ENCODE measurements at regions of chr17 and their contacts with region 1.

Region 1: GRCh38 chr17:36148559-36149295 is 27.7 kb downstream of the TBC1D3B start:
- DNase-seq: peak; percentile 45
- H3K4me3 ChIP-seq: no peak overlapping the region
- H3K27ac ChIP-seq: no peak overlapping the region
- H3K27me3 ChIP-seq: peaks cover 8% of the 10 kb centered on the region
- CTCF ChIP-seq: peak; percentile 100

Region 2: DNA sequence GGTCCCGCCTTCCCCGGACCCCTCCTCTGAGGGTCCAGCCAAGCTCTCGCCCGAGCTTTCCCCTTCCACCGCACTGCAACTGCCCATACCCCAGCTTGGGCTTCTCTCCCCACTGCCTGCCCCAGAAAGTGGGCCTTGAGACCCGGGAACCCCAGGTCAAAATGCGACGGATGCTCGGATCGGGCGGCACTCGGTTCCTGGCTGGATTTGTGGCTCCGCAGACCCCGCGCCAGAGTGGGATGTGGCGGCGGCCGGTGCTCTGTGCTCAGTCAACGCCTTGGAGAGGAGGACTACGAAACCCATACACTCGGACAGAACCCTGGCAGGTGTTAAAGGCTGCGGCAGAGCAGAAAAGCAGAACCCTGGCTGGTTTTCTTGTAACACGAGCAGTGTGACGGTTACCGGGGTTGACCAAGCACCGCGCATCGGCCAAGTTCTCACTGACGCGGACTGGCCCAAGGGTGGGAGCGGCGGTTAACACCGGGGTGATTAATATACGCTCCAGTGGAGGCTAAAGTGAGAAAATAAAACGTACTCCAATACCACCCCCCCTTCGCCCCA is 699.3 kb before region 1 on chr17:
- CTCF ChIA-PET with region 1: no interaction called
- POLR2A ChIA-PET with region 1: no interaction called
- DNase-seq: no peak
- H3K4me3 ChIP-seq: peak overlapping the region; percentile 12
- H3K27ac ChIP-seq: no peak overlapping the region
- H3K27me3 ChIP-seq: peaks cover 18% of the 10 kb centered on the region
- CTCF ChIP-seq: no peak

Region 3: DNA sequence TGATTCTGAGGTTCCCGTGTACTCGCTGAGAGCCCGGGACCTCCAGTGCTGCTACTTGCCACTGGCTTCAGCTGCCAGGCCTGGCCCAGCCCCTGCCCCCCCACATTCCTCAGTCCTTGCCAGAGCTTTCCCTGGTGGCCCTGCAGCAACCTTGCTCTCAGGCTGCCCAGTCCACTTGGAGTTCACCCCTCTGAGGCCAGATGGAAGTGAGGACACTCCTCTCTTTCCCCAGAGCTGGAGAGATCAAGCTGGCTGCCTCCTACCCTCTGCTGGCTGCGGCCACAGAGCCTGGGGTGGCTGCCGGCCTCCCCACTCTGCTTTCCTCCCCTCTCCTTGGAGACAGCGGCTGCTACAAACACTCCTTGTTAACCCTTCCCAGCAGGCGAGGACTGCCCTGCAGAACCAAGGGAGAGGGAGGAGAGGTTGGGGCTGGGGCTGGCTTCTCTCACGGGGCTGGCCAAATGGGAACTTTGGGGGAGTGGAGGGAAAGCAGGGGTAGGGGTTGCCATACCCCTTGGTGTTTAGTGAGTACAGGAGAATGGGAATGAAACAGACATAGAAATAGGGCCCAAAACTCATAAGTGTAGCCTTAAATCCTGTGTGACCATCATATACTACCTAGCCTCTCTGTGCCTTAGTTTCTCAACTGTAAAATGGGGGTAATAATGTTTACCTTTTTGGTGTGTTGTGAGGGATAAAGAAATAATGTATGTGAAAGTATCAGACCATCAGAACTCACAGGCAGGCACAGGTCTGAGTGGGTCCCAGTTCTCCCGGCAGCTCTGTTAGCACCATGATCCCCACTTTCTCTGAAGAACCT is 395.6 kb before region 1 on chr17 and contains the start of gene GAS2L2:
- CTCF ChIA-PET with region 1: no interaction called
- POLR2A ChIA-PET with region 1: no interaction called
- DNase-seq: no peak
- H3K4me3 ChIP-seq: no peak within 1 kb of the TSS
- H3K27ac ChIP-seq: no peak within 1 kb of the TSS
- H3K27me3 ChIP-seq: peaks cover 40% of the 10 kb centered on the region
- CTCF ChIP-seq: no peak
- polyA plus RNA-seq, gene GAS2L2: not detected in 2 replicates

Region 4: GRCh38 chr17:35969558-35970380 is 179.0 kb before region 1 on chr17:
- CTCF ChIA-PET with region 1: interaction called, 111 read pairs
- POLR2A ChIA-PET with region 1: no interaction called
- DNase-seq: peak; percentile 58
- H3K4me3 ChIP-seq: no peak overlapping the region
- H3K27ac ChIP-seq: no peak overlapping the region
- H3K27me3 ChIP-seq: no peaks in the 10 kb centered on the region
- CTCF ChIP-seq: peak; percentile 80

Region 5: DNA sequence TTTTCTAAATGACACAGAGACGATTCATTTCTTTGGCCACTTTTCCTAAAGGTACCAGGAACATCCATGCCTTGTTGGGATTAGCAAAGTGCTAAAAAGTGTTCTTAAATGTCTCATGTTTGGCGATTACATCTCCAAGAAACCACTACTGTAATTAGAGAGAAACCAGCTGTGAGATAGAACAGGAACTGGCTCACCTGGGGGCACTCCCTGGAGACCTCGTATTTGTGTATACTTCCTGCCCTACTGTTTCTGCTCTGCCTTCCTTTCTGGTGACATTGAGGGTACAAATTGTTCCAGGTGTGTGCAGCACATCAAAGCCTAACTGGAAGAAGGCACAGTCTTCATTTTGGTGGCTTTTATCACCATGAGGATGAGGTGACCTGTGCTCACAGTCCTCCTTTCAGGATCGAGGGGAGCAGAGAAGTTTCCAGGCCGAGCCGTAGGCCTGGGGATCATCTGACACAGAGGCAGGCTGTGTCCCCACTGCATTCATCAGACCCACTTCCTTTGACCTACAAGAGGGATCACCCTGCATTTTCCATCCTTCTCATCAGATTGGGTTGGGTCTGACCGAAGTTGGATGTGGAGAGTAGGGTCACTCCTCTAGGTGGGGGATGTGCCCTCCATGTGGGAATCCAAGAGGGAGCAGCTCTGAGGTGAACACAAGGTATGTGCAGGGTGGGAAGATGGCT is 21.4 kb before region 1 on chr17:
- CTCF ChIA-PET with region 1: interaction called, 36 read pairs
- POLR2A ChIA-PET with region 1: no interaction called
- DNase-seq: no peak
- H3K4me3 ChIP-seq: no peak overlapping the region
- H3K27ac ChIP-seq: no peak overlapping the region
- H3K27me3 ChIP-seq: peaks cover 3% of the 10 kb centered on the region
- CTCF ChIP-seq: no peak

Region 6: GRCh38 chr17:36183001-36183971 is 34.6 kb after region 1 on chr17:
- CTCF ChIA-PET with region 1: interaction called, 38 read pairs
- POLR2A ChIA-PET with region 1: no interaction called
- DNase-seq: peak; percentile 59
- H3K4me3 ChIP-seq: peak overlapping the region; percentile 73
- H3K27ac ChIP-seq: peak overlapping the region; percentile 47
- H3K27me3 ChIP-seq: peaks cover 23% of the 10 kb centered on the region
- CTCF ChIP-seq: no peak

Region 7: DNA sequence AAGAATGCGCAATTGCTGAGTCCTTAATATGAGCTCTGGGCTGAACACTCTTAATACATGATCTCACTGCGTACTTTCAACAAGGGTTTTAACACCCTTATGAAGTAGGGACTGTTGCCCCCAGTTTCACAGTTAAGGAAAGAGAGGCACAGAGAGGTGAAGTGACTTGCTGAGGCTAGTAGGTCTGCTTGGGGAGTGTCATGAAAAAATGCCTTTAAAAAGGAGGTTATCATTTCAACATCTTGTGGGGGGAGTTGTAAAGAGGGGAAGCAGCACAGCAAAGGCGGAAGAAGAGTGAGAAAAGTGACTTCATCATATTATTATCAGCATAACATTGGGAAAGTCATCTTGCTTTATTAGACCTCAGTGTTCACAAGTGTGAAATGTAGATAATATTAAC is 64.2 kb after region 1 on chr17:
- CTCF ChIA-PET with region 1: no interaction called
- POLR2A ChIA-PET with region 1: no interaction called
- DNase-seq: no peak
- H3K4me3 ChIP-seq: no peak overlapping the region
- H3K27ac ChIP-seq: no peak overlapping the region
- H3K27me3 ChIP-seq: peaks cover 6% of the 10 kb centered on the region
- CTCF ChIP-seq: no peak

Region 8: GRCh38 chr17:36482611-36483504 is 334.1 kb after region 1 on chr17:
- CTCF ChIA-PET with region 1: interaction called, 19 read pairs
- POLR2A ChIA-PET with region 1: no interaction called
- DNase-seq: peak; percentile 38
- H3K4me3 ChIP-seq: peak overlapping the region; percentile 40
- H3K27ac ChIP-seq: no peak overlapping the region
- H3K27me3 ChIP-seq: peaks cover 11% of the 10 kb centered on the region
- CTCF ChIP-seq: peak; percentile 79